MCF 10A (cell line): ENCODE measurements at regions of chr1 and their contacts with region 1.

Region 1: GRCh38 chr1:8314346-8315280 is 3.3 kb upstream of the SLC45A1 start:
- DNase-seq: peak; percentile 85
- H3K4me3 Mint-ChIP-seq: no peak overlapping the region
- H3K27ac Mint-ChIP-seq: no peak overlapping the region
- H3K4me1 Mint-ChIP-seq: peaks cover 15% of the 10 kb centered on the region
- H3K27me3 Mint-ChIP-seq: no peaks in the 10 kb centered on the region
- CTCF ChIP-seq: peak; percentile 95

Region 2: DNA sequence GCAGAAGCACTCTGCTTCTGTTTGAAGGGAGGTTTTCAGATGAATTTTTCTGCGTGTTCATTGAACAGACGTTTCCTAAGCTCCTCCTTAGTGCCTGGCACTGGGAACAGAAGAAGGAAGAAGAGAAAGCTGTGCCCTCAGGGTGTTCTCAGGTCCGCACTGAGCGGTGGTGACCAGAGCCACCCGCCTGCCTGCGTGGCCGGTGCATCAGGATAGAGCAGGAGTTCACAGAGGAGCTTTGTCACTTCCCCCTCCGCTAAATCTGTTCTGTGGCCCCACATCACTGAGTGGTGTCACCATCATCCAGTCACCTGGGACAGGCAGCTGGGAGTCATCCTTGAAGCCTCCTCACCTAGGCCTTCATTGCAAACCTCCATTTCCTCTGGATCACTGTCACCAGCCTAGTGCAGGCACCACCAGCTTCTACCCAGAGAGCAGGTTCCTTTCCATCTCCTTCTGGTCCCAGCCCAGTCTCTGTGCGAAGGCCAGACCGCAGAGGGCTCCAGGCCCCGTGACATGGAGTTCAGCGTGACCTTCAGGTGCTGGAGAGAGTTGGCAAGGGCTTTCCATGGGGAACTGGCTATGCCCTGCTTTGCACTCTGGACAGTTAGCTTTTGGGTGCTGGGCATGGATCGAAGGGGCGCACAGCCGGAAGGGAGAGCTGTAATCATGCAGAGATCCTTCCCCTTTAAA is 331.4 kb before region 1 on chr1:
- CTCF ChIA-PET with region 1: interaction called, 49 read pairs
- POLR2A ChIA-PET with region 1: interaction called, 7 read pairs
- intact Hi-C with region 1: loop called (anchors 1 kb)
- DNase-seq: no peak
- H3K4me3 Mint-ChIP-seq: no peak overlapping the region
- H3K27ac Mint-ChIP-seq: peak overlapping the region; percentile 54
- H3K4me1 Mint-ChIP-seq: peaks cover 6% of the 10 kb centered on the region
- H3K27me3 Mint-ChIP-seq: no peaks in the 10 kb centered on the region
- CTCF ChIP-seq: no peak

Region 3: GRCh38 chr1:7989762-7990428 is 324.7 kb before region 1 on chr1:
- CTCF ChIA-PET with region 1: interaction called, 49 read pairs
- POLR2A ChIA-PET with region 1: interaction called, 7 read pairs
- intact Hi-C with region 1: no loop called
- DNase-seq: no peak
- H3K4me3 Mint-ChIP-seq: no peak overlapping the region
- H3K27ac Mint-ChIP-seq: no peak overlapping the region
- H3K4me1 Mint-ChIP-seq: peaks cover 15% of the 10 kb centered on the region
- H3K27me3 Mint-ChIP-seq: no peaks in the 10 kb centered on the region
- CTCF ChIP-seq: no peak

Region 4: GRCh38 chr1:8004803-8005554 is 309.6 kb before region 1 on chr1:
- CTCF ChIA-PET with region 1: interaction called, 5 read pairs
- POLR2A ChIA-PET with region 1: interaction called, 10 read pairs
- intact Hi-C with region 1: no loop called
- DNase-seq: peak; percentile 99
- H3K4me3 Mint-ChIP-seq: peak overlapping the region; percentile 57
- H3K27ac Mint-ChIP-seq: peak overlapping the region; percentile 84
- H3K4me1 Mint-ChIP-seq: peaks cover 38% of the 10 kb centered on the region
- H3K27me3 Mint-ChIP-seq: no peaks in the 10 kb centered on the region
- CTCF ChIP-seq: no peak

Region 5: GRCh38 chr1:8238851-8239305 is 75.7 kb before region 1 on chr1:
- CTCF ChIA-PET with region 1: interaction called, 5 read pairs
- POLR2A ChIA-PET with region 1: interaction called, 6 read pairs
- intact Hi-C with region 1: loop called (anchors 1 kb)
- DNase-seq: peak; percentile 88
- H3K4me3 Mint-ChIP-seq: no peak overlapping the region
- H3K27ac Mint-ChIP-seq: peak overlapping the region; percentile 86
- H3K4me1 Mint-ChIP-seq: peaks cover 14% of the 10 kb centered on the region
- H3K27me3 Mint-ChIP-seq: no peaks in the 10 kb centered on the region
- CTCF ChIP-seq: peak; percentile 37

Region 6: GRCh38 chr1:8348777-8349491 is 34.3 kb after region 1 on chr1:
- CTCF ChIA-PET with region 1: interaction called, 4 read pairs
- POLR2A ChIA-PET with region 1: interaction called, 5 read pairs
- intact Hi-C with region 1: loop called (anchors 1 kb)
- DNase-seq: peak; percentile 67
- H3K4me3 Mint-ChIP-seq: no peak overlapping the region
- H3K27ac Mint-ChIP-seq: peak overlapping the region; percentile 5
- H3K4me1 Mint-ChIP-seq: peaks cover 20% of the 10 kb centered on the region
- H3K27me3 Mint-ChIP-seq: peaks cover 14% of the 10 kb centered on the region
- CTCF ChIP-seq: peak; percentile 89

Region 7: DNA sequence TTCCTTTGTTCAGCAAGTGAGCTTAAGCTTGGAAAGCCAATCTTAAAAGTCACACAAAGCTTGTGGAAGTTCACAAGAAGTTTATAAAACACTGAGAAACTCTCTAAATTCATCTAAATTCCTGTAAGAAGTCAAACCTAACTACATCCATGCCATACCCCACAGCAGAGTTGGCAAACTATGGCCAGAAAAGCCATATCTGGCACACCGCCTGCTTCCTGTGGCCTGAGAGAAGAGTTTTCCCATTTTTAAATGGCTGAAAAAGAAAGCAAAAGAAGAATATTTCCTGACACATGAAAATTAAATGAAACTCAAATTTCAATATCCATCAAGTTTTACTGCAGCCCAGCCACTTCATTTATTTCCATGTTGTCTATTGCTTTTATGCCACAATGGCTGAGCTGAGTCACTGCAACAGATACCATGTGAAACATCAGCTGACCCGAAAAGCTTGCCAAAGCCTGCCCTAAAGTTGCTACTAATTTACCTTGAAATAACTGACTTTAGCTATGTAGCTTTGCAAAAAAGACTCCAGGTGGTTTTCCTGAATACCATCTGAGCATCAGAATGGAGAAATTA is 240.4 kb after region 1 on chr1:
- CTCF ChIA-PET with region 1: no interaction called
- POLR2A ChIA-PET with region 1: no interaction called
- intact Hi-C with region 1: no loop called
- DNase-seq: peak; percentile 62
- H3K4me3 Mint-ChIP-seq: no peak overlapping the region
- H3K27ac Mint-ChIP-seq: peak overlapping the region; percentile 61
- H3K4me1 Mint-ChIP-seq: no peaks in the 10 kb centered on the region
- H3K27me3 Mint-ChIP-seq: no peaks in the 10 kb centered on the region
- CTCF ChIP-seq: no peak